ENCODE measurements at regions of chr2 and their contacts with region 1.

Region 1: DNA sequence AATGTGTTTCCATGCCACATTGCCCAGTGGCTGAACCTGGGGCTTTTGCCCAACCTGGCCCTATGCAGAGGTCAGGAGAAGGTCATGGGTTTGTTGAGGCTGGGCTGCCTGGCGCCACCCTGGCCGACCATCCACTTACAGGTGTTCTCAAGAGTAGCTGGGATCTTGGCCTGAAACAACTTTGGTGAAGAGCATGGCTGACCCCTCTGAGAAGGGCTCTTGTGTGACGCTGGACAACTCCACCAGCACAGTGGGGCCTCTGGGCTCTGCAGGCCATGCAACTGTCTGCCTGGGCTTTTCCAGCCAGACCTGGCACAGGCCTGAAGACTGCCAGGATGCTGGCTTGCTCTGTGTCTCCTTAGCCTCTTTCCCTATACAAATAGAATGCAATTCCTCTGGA is 76.4 kb upstream of the ZNG1B start:
- DNase-seq: no peak
- H3K4me3 ChIP-seq: no peak overlapping the region
- H3K27ac ChIP-seq: no peak overlapping the region
- H3K4me1 ChIP-seq: no peaks in the 10 kb centered on the region
- H3K27me3 ChIP-seq: no peaks in the 10 kb centered on the region
- CTCF ChIP-seq: no peak
- POLR2A ChIP-seq: no peak

Region 2: DNA sequence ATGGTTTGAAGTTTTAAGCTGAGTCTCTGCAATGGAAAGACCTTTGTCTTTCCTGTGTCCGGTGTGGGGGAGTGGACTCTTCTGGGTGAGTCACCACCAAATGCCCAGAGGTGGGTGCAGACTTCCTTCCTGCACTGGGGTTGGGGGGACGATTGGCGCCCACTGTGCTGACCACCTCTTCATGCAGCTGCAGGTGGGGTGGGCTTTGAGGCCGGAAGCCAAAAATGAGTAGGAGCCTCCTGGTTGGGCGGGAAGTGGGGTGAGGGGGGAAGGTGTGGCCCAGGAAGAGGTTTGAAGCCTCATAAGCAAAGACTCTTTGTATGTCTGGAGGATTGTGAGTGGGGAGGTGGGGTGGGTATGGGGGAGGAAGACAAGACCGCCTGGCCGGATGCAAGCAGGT is 109.9 kb before region 1 on chr2:
- intact Hi-C with region 1: loop called (anchors 10 kb)
- DNase-seq: no peak
- H3K4me3 ChIP-seq: no peak overlapping the region
- H3K27ac ChIP-seq: no peak overlapping the region
- H3K4me1 ChIP-seq: peaks cover 4% of the 10 kb centered on the region
- H3K27me3 ChIP-seq: no peaks in the 10 kb centered on the region
- CTCF ChIP-seq: no peak
- POLR2A ChIP-seq: no peak